Ovary (tissue), 10 donors: ENCODE measurements at regions of chr10 and their contacts with region 1.

Region 1: DNA sequence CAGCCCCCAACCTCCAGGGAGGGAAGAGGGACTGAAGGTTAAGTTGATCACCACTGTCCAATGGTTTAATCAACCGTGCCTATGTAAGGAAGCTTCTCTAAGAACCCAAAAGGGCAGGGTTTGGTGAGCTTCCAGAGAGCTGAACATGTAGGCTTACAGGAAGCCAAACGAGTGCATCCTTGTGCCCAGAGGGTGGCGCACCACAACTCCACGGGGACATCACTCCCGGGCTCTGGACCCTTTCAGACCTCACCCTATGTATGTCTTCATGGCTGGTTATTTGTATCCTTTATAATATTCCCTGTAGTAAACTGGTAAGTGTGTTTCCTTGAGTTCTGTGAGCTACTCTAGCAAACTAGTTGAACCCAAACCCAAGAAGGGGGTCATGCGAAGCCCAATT is 11.5 kb upstream of the NFKB2 start:
- DNase-seq: no peak
- H3K4me3 ChIP-seq: no peak overlapping the region
- H3K27ac ChIP-seq: no peak overlapping the region
- H3K4me1 ChIP-seq: no peaks in the 10 kb centered on the region
- H3K27me3 ChIP-seq: no peaks in the 10 kb centered on the region
- CTCF ChIP-seq: no peak
- EP300 ChIP-seq: no peak
- POLR2A ChIP-seq: no peak

Region 2: DNA sequence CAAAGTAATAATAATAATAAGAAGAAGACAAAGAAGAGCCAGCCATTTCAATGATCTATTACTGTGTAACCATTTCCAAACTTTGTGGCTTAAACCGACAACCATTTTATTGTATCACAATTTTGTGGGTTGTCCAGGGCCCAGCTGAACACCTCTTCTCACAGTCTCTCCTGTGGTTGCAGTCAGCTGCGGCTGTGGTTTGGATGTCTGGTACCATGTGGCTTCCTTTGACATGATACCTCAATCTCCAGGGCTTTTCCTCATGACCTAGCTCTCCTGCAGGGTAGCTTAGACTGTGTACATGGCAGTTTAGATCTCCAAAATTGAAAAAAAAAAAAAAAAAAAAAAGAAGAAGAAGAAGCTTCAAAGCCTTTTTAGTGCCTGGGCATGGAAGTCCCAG is 61.1 kb before region 1 on chr10:
- intact Hi-C with region 1: no loop called
- DNase-seq: no peak
- H3K4me3 ChIP-seq: no peak overlapping the region
- H3K27ac ChIP-seq: no peak overlapping the region
- H3K4me1 ChIP-seq: peaks cover 2% of the 10 kb centered on the region
- H3K27me3 ChIP-seq: no peaks in the 10 kb centered on the region
- CTCF ChIP-seq: no peak
- EP300 ChIP-seq: no peak
- POLR2A ChIP-seq: no peak

Region 3: DNA sequence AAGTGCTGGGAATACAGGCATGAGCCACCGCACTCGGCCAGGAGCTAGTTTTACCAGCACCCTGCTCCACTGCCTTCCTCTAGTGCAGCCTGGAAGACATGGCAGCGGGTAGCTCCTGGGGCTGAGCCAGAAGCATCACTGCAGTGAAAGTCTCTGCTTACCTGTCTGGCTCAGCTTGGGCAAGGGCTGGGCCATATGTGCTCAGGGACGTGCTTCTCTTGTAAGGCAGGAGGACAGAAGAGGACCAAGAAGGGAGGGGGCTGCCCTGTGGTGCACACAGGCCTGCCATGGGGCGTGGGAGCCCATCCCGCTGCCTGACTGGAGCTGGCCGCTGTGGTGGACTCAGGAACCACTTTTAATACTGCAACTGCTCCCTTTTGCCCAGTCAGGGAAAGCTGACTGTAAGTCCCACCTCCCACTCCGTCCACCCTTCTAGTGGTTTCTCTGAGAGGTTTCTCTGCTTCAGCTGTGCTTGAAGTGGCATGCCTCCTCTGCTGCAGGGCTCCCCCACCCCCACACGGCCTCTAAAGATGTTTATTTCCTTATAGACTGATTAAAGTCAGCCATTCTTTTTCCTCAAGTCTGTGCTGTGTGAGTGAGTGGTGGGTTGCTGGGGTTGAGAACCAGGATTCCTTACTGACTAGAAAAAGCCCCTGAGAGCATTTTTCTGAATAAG is 92.6 kb after region 1 on chr10:
- intact Hi-C with region 1: loop called in 1 of 4 experiments (anchors 10 kb)
- DNase-seq: no peak
- H3K4me3 ChIP-seq: no peak overlapping the region
- H3K27ac ChIP-seq: no peak overlapping the region
- H3K4me1 ChIP-seq: no peaks in the 10 kb centered on the region
- H3K27me3 ChIP-seq: no peaks in the 10 kb centered on the region
- CTCF ChIP-seq: no peak
- EP300 ChIP-seq: no peak
- POLR2A ChIP-seq: no peak

Region 4: DNA sequence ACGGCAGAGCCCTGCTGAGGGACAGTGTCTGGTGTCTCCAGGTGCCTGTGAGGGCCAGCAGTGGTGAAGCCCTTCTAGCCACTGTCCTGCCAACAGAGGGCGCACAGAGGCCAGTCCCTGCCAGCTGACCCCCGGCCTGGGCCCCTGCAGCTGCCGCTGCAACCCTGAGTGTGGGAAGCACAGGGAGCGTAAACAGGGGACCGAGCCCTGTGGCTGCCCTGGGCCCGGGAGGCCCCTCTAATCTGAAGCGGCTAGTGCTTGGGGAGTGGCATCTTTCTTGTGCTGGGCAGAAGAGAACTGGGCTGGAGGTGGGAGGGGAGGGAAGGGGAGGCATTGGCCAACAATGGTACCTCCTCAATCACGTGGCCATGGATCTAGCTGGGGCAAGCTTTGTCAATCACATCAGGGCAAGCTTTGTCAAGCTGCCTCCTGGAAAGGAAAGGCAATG is 294.8 kb after region 1 on chr10:
- intact Hi-C with region 1: no loop called
- DNase-seq: peak; percentile 70 to 82 (median 74)
- H3K4me3 ChIP-seq: no peak overlapping the region
- H3K27ac ChIP-seq: peak overlapping the region in 1 of 2 donors; percentile 32
- H3K4me1 ChIP-seq: peaks cover 30% of the 10 kb centered on the region
- H3K27me3 ChIP-seq: no peaks in the 10 kb centered on the region
- CTCF ChIP-seq: peak; percentile 11 to 64 (median 43)
- EP300 ChIP-seq: no peak
- POLR2A ChIP-seq: no peak